ENCODE measurements at regions of chr6 and their contacts with region 1.

Region 1: DNA sequence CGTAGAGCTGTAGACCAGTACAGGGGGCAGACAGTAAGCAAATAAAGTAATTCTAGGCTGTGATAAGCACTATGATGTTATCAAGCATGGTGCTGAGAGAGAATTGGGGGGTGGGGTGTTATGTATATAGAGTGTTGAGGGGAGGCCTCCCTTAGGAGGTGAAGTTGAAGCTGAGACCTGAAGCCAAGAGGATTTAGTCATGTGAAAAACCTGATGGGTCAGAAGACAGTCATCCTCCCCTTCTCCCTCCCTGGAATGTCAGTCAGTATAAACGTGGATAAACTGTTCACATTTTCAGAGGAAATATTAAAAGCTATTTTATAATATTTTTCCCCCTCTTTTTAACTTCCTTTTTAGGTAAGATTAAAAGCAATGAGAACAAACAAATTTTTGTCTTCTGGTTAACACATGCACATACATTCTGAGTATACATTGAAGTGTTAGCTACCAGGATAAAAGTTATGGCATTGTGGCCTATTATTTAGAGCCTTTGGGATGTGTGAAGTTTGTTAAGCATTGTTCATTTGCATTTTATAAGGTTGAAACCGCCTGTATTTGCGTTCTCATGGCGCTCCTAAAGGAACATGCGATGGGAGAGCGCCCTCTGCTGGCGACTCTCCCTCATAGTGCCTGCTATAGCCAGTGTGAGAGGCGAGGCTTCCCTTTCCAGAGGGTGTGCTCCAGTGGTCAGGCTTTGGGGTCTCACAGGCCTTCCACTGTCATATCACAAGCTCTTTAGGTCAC is 35.4 kb upstream of the MAPK13 start:
- DNase-seq: peak; percentile 92
- ATAC-seq: peak; percentile 87
- H3K4me3 Mint-ChIP-seq: no peak overlapping the region
- H3K27ac Mint-ChIP-seq: peak overlapping the region; percentile 35
- H3K4me1 Mint-ChIP-seq: peaks cover 39% of the 10 kb centered on the region
- H3K27me3 Mint-ChIP-seq: no peaks in the 10 kb centered on the region

Region 2: DNA sequence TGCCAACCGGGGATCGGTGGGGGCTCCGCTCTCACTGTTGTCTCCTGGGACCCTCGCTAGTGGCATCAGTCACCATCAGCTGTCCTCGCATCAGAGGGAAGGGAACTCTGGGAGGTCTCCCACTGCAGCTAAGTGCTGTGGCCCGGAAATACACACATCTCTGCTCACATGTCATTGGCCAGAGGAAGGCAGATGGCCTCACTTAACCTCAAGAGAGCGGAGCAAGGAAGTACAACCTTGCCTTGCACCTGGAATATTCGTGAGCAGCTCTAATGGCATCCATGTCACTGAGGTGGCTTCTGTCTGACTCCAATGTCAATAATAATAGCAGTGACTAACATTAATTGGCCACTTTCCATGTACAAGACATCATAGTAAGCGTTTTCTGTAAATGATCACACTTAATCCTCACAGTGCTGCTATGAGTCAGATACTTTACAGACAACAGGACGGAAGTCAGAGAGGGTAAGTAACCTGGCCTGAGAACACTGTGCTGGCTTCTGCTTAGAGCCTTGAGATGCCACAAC is 283.9 kb before region 1 on chr6:
- CTCF ChIA-PET with region 1: no interaction called
- POLR2A ChIA-PET with region 1: interaction called, 13 read pairs
- intact Hi-C with region 1: no loop called
- DNase-seq: no peak
- ATAC-seq: peak; percentile 39
- H3K4me3 Mint-ChIP-seq: no peak overlapping the region
- H3K27ac Mint-ChIP-seq: no peak overlapping the region
- H3K4me1 Mint-ChIP-seq: no peaks in the 10 kb centered on the region
- H3K27me3 Mint-ChIP-seq: peaks cover 10% of the 10 kb centered on the region

Region 3: GRCh38 chr6:35920793-35921732 is 173.9 kb before region 1 on chr6 and contains the start of gene SRPK1:
- CTCF ChIA-PET with region 1: interaction called, 10 read pairs
- POLR2A ChIA-PET with region 1: no interaction called
- intact Hi-C with region 1: loop called in 1 of 2 experiments (anchors 2 kb)
- DNase-seq: peak; percentile 94
- ATAC-seq: peak; percentile 80
- H3K4me3 Mint-ChIP-seq: peak within 1 kb of the TSS; percentile 95
- H3K27ac Mint-ChIP-seq: peak within 1 kb of the TSS; percentile 97
- H3K4me1 Mint-ChIP-seq: peaks cover 45% of the 10 kb centered on the region
- H3K27me3 Mint-ChIP-seq: no peaks in the 10 kb centered on the region
- total RNA-seq, gene SRPK1: 100 to 118 TPM

Region 4: GRCh38 chr6:36064770-36065396 is 30.0 kb before region 1 on chr6:
- CTCF ChIA-PET with region 1: interaction called, 11 read pairs
- POLR2A ChIA-PET with region 1: no interaction called
- intact Hi-C with region 1: no loop called
- DNase-seq: no peak
- ATAC-seq: peak; percentile 45
- H3K4me3 Mint-ChIP-seq: no peak overlapping the region
- H3K27ac Mint-ChIP-seq: no peak overlapping the region
- H3K4me1 Mint-ChIP-seq: peaks cover 50% of the 10 kb centered on the region
- H3K27me3 Mint-ChIP-seq: no peaks in the 10 kb centered on the region

Region 5: DNA sequence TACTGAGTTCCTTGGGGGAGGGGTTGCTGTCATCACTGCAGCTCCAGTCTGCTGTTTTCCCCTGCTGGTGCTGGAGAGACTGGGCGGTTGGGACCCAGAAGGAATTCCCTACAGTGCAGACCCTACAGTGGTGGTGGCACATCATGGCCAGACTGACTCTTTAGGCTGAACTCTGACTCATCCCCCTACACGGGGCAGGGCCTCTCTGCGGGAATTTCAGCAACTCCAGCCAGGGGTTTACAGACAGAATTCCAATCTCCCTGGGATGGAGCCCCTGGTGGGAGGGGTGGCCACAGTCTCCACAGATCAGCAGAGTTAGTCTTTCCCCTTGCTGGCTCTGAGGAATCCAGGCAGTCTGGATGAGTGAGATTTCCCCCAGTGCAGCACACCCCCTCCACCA is 11.5 kb before region 1 on chr6:
- CTCF ChIA-PET with region 1: interaction called, 55 read pairs
- POLR2A ChIA-PET with region 1: no interaction called
- intact Hi-C with region 1: no loop called
- DNase-seq: no peak
- ATAC-seq: no peak
- H3K4me3 Mint-ChIP-seq: no peak overlapping the region
- H3K27ac Mint-ChIP-seq: no peak overlapping the region
- H3K4me1 Mint-ChIP-seq: peaks cover 8% of the 10 kb centered on the region
- H3K27me3 Mint-ChIP-seq: no peaks in the 10 kb centered on the region

Region 6: GRCh38 chr6:36131511-36132245 is 36.8 kb after region 1 on chr6:
- CTCF ChIA-PET with region 1: interaction called, 11 read pairs
- POLR2A ChIA-PET with region 1: no interaction called
- intact Hi-C with region 1: loop called in 1 of 2 experiments (anchors 2 kb)
- DNase-seq: peak; percentile 80
- ATAC-seq: peak; percentile 84
- H3K4me3 Mint-ChIP-seq: peak overlapping the region; percentile 84
- H3K27ac Mint-ChIP-seq: peak overlapping the region; percentile 96
- H3K4me1 Mint-ChIP-seq: peaks cover 55% of the 10 kb centered on the region
- H3K27me3 Mint-ChIP-seq: no peaks in the 10 kb centered on the region

Measured in activated CD4-positive, alpha-beta T cell treated with anti-CD3 and anti-CD28 coated beads for 36 hours (primary cell).